Activated CD4-positive, alpha-beta T cell treated with anti-CD3 and anti-CD28 coated beads for 36 hours (primary cell): ENCODE measurements at regions of chr9 and their contacts with region 1.

Region 1: GRCh38 chr9:1400983-1401382 is 350.8 kb downstream of the DMRT2 start:
- DNase-seq: no peak
- ATAC-seq: no peak
- H3K4me3 Mint-ChIP-seq: no peak overlapping the region
- H3K27ac Mint-ChIP-seq: no peak overlapping the region
- H3K4me1 Mint-ChIP-seq: no peaks in the 10 kb centered on the region
- H3K27me3 Mint-ChIP-seq: no peaks in the 10 kb centered on the region

Region 2: GRCh38 chr9:1208157-1208556 is 192.8 kb before region 1 on chr9:
- CTCF ChIA-PET with region 1: no interaction called
- POLR2A ChIA-PET with region 1: no interaction called
- intact Hi-C with region 1: no loop called
- DNase-seq: no peak
- ATAC-seq: no peak
- H3K4me3 Mint-ChIP-seq: no peak overlapping the region
- H3K27ac Mint-ChIP-seq: no peak overlapping the region
- H3K4me1 Mint-ChIP-seq: no peaks in the 10 kb centered on the region
- H3K27me3 Mint-ChIP-seq: peaks cover 4% of the 10 kb centered on the region

Region 3: DNA sequence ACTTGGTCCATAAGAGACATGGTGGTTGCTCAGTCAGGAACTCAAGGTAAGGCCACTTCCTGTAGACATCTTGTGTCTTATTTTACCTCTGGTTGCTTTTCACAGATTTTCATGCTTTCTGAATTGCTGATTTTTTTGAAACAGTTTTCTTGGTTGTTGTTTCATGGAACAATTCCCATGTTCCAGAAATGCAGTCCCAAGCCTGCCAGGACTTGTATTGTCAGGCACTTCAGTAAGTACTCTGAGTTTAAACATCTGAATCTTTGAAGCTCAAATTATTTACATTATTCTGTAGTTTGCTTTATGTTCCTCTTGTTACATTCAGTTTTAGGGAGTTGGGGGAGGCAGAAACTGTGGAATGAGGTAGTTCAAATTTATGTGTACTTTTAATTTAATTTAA is 60.6 kb before region 1 on chr9:
- CTCF ChIA-PET with region 1: no interaction called
- POLR2A ChIA-PET with region 1: no interaction called
- intact Hi-C with region 1: loop called in 1 of 2 experiments (anchors 10 kb)
- DNase-seq: no peak
- ATAC-seq: no peak
- H3K4me3 Mint-ChIP-seq: no peak overlapping the region
- H3K27ac Mint-ChIP-seq: no peak overlapping the region
- H3K4me1 Mint-ChIP-seq: no peaks in the 10 kb centered on the region
- H3K27me3 Mint-ChIP-seq: peaks cover 2% of the 10 kb centered on the region

Region 4: GRCh38 chr9:1386420-1386819 is 14.6 kb before region 1 on chr9:
- CTCF ChIA-PET with region 1: no interaction called
- POLR2A ChIA-PET with region 1: no interaction called
- intact Hi-C with region 1: no loop called
- DNase-seq: no peak
- ATAC-seq: no peak
- H3K4me3 Mint-ChIP-seq: no peak overlapping the region
- H3K27ac Mint-ChIP-seq: no peak overlapping the region
- H3K4me1 Mint-ChIP-seq: no peaks in the 10 kb centered on the region
- H3K27me3 Mint-ChIP-seq: no peaks in the 10 kb centered on the region